ENCODE measurements at regions of chr3 and their contacts with region 1.

Region 1: GRCh38 chr3:170180908-170181879 is at the start of gene PHC3:
- DNase-seq: peak; percentile 97
- H3K4me3 ChIP-seq: peak within 1 kb of the TSS; percentile 59 to 97 (median 84)
- H3K27ac ChIP-seq: peak within 1 kb of the TSS; percentile 96 to 99 (median 98)
- H3K4me1 ChIP-seq: peaks cover 19 to 53% (median 39%) of the 10 kb centered on the region in 6 donors
- H3K27me3 ChIP-seq: no peaks in the 10 kb centered on the region
- CTCF ChIP-seq: peak in 7 of 11 experiments; percentile 21 to 61 (median 26)
- POLR2A ChIP-seq: peak; percentile 20 to 76 (median 76)
- total RNA-seq, gene PHC3: 87.5 to 130 (median 98.3) TPM

Region 2: DNA sequence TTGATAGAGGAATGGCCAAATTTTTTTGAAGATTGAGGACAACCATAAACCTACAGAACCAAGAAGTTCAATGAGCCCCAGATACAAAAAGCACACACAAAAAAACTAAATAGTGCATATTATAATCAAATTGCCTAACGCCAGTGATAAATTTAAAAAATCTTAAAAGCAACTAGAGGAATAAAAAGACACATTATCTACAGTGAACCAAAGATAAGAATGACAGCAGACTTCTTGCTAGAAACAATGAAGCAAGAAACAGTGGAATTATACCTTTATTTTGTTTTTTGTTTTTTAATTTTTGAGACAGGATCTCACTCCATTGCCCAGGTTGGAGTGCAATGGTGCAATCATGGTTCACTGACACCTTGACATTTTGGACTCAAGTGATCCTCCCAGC is 279.7 kb before region 1 on chr3:
- intact Hi-C with region 1: no loop called
- DNase-seq: no peak
- H3K4me3 ChIP-seq: no peak overlapping the region
- H3K27ac ChIP-seq: no peak overlapping the region
- H3K4me1 ChIP-seq: no peaks in the 10 kb centered on the region
- H3K27me3 ChIP-seq: no peaks in the 10 kb centered on the region
- CTCF ChIP-seq: no peak
- POLR2A ChIP-seq: no peak

Region 3: DNA sequence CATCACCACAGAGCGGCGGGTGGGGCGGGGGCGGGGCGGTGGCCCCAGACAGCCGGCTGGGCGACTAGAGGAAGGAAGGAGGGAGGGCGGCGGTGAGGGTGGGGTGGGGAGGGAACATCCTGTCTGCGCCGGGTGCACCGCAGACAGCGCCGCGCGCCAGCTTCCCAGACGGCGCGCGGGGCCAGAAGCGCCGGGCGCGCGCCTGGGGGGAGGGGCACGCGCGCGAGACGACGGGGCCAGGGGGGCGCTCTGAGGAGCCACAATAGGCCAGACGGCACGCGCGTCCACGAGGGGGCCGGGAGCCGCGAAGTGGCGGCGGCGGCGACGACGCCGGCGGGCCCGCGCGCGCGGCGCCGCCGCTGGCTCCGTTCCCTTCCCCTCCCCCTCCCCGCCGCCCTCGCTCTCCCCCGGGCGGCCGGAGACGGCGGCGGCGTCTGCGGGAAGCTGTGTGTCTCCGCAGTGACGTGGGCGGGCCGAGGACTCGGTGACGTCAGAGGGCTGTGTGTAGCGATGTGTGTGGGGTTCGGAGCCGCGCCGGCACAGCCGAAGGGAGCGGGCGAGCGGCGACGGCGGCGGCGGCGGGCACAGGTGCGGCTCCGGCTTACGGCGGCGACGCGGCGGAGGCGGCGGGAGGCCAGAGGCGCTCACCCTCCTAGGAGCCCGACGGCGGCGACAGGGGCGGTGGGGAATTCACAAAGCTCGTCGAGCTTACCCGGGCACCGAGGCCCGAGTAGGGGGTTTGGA is 176.2 kb after region 1 on chr3 and contains the start of gene SKIL:
- intact Hi-C with region 1: loop called (anchors 10 kb)
- DNase-seq: peak; percentile 100
- H3K4me3 ChIP-seq: peak within 1 kb of the TSS; percentile 71 to 95 (median 84)
- H3K27ac ChIP-seq: peak within 1 kb of the TSS; percentile 95 to 100 (median 99)
- H3K4me1 ChIP-seq: peaks cover 31 to 86% (median 68%) of the 10 kb centered on the region in 6 donors
- H3K27me3 ChIP-seq: no peaks in the 10 kb centered on the region
- CTCF ChIP-seq: peak in 4 of 11 experiments; percentile 30 to 49 (median 46)
- POLR2A ChIP-seq: peak in 2 of 3 donors; percentile 64 to 69
- total RNA-seq, gene SKIL: 32.8 to 48.2 (median 36.2) TPM

Measured in spleen (tissue), 13 donors.